WTC11 (cell line): ENCODE measurements at regions of chr10 and their contacts with region 1.

Region 1: DNA sequence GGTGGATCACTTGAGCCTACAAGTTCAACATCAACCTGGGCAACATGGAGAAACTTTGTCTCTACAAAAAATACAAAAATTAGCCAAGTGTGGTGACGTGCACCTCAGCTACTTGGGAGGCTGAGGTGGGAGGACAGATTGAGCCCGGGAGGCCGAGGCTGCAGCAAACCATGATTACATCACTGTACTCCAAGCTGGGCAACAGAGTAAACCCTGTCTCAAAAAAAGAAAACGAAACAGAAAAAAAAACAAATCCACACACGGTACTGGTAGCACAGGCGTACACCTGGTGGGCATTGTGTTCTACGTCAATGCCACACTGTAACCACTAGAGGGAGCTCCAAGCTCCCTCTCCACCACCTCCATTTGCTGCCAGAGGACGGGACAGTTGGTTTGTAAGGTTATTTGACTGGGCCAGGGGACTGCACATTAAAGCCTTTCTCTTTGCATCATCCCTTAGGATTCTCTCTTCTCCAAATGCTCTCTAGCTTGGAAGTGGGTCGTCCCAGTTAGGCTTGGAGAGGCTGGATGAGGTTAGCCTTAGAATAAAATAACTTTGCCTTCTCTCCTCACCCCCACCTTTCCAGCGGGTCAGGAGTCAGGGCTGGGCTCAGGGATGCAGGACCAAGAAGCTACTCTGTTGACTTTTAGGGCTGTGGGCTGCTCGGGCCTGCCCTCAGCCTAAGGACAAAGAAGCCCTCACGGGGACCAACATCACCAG is 130.8 kb downstream of the SORBS1 start:
- DNase-seq: peak; percentile 55
- ATAC-seq: peak; percentile 96
- H3K4me3 Mint-ChIP-seq: no peak overlapping the region
- H3K27ac Mint-ChIP-seq: no peak overlapping the region
- H3K4me1 Mint-ChIP-seq: peaks cover 2% of the 10 kb centered on the region; the same call in 1 of the 2 replicates
- H3K27me3 Mint-ChIP-seq: no peaks in the 10 kb centered on the region
- CTCF ChIP-seq: peak; percentile 96

Region 2: DNA sequence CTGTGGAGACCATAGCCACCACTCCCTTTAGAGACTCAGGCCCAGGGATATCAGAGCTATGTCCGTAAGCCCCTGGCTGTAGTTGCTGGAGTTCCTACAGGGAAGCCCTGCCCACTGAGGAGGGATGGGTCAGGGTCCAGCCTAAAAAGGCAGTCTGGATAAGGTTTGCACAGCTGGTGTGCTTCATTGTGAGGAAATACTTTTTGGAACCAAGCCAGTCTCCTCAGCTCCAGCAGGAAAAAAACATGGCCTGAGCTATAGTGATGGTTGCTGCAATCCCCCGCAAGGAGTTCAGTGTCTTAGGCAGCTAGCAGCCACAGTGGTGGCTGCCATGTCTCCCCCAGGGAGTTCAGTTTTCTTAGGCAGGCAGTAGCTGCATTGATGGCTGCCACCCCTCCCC is 308.5 kb before region 1 on chr10:
- CTCF ChIA-PET with region 1: no interaction called
- POLR2A ChIA-PET with region 1: no interaction called
- DNase-seq: no peak
- ATAC-seq: no peak
- H3K4me3 Mint-ChIP-seq: no peak overlapping the region
- H3K27ac Mint-ChIP-seq: no peak overlapping the region
- H3K4me1 Mint-ChIP-seq: no peaks in the 10 kb centered on the region
- H3K27me3 Mint-ChIP-seq: peaks cover 32% of the 10 kb centered on the region
- CTCF ChIP-seq: no peak

Region 3: DNA sequence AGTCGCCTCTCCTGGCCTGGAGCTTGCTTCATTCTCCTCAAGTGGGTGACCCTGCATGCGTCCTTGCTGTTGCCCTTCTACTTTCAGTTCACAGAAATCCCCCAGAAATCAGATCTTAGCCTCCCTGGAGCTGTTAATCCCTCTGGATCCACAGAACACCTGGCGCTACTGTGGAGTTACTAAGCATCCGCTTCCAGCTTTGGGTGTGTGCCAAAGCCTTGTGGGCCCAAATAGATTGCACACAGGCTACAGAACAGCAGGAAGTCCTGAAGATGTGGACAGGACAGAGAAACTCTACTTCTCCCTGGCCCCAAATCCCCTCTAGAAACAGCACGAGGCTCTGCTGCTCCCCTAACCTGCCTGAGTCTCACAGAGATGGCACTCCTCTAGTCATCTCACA is 103.0 kb before region 1 on chr10:
- CTCF ChIA-PET with region 1: no interaction called
- POLR2A ChIA-PET with region 1: no interaction called
- DNase-seq: no peak
- ATAC-seq: no peak
- H3K4me3 Mint-ChIP-seq: no peak overlapping the region
- H3K27ac Mint-ChIP-seq: no peak overlapping the region
- H3K4me1 Mint-ChIP-seq: peaks cover 9% of the 10 kb centered on the region
- H3K27me3 Mint-ChIP-seq: no peaks in the 10 kb centered on the region
- CTCF ChIP-seq: no peak

Region 4: DNA sequence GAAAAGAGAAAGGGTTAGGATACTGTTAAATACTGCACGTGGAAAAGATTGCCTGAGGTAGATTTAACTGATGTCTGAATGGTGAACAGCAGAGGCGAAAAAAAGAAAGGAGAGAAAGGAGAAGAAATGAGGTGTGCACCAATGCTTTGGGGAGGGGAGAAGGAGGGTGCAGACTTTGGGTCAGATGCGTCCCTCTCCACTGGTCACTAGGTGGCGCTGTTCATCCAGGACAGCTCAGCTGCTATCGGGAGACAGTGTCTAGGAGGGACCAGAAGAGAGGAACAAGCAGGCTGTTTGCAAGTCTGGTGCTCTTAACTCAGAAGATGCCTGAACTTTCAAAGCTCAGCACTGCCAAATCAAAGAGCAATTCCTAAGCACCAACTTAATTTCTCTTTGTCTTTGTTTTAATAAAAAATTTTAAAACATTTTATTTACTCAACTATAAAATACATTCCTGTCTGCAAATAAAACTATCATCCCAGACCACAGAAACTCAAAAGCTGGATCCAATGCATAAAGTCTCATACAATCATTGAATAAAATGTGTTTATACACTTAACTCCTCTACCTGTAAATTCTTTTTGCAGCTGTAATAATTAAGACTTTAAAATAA is 55.7 kb before region 1 on chr10:
- CTCF ChIA-PET with region 1: interaction called, 35 read pairs
- POLR2A ChIA-PET with region 1: no interaction called
- DNase-seq: peak; percentile 86
- ATAC-seq: peak; percentile 98
- H3K4me3 Mint-ChIP-seq: no peak overlapping the region
- H3K27ac Mint-ChIP-seq: no peak overlapping the region
- H3K4me1 Mint-ChIP-seq: peaks cover 28% of the 10 kb centered on the region
- H3K27me3 Mint-ChIP-seq: no peaks in the 10 kb centered on the region
- CTCF ChIP-seq: peak; percentile 99

Region 5: GRCh38 chr10:95403700-95404461 is 26.5 kb before region 1 on chr10:
- CTCF ChIA-PET with region 1: interaction called, 13 read pairs
- POLR2A ChIA-PET with region 1: no interaction called
- DNase-seq: no peak
- ATAC-seq: no peak
- H3K4me3 Mint-ChIP-seq: no peak overlapping the region
- H3K27ac Mint-ChIP-seq: peak overlapping the region; percentile 40; the same call in 1 of the 2 replicates
- H3K4me1 Mint-ChIP-seq: peaks cover 9% of the 10 kb centered on the region
- H3K27me3 Mint-ChIP-seq: no peaks in the 10 kb centered on the region
- CTCF ChIP-seq: no peak

Region 6: DNA sequence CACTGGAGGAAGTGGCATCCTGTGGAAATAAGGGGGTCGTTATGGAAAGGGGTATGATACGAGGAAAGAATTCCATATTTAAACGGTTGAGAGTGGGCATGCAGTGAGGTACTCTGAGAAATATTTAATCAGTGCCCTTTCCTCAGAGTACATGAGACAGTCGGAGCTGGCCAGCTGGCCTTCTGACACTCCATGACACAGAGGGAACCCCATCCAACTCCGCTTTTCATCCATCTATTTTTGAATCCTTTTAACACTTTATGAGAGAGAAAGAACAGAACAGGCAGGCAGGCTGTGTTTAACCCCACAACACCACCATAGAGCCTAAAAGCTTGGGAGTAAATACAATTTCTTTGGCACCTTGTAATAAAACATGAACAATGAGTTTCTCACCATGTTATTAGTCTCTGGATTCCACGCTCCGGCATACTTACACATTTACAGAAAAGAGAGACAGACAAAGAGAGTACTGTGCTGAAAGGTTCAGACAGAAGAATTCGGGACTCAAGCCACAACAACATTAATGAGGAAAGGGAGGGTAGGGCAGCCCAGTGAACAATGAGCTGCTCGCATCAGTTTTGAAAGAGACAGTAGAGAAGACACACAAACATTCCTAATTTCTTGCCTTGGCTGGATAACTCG is 15.4 kb before region 1 on chr10:
- CTCF ChIA-PET with region 1: interaction called, 21 read pairs
- POLR2A ChIA-PET with region 1: no interaction called
- DNase-seq: no peak
- ATAC-seq: no peak
- H3K4me3 Mint-ChIP-seq: no peak overlapping the region
- H3K27ac Mint-ChIP-seq: peak overlapping the region; percentile 85
- H3K4me1 Mint-ChIP-seq: peaks cover 43% of the 10 kb centered on the region
- H3K27me3 Mint-ChIP-seq: no peaks in the 10 kb centered on the region
- CTCF ChIP-seq: no peak

Region 7: GRCh38 chr10:95445837-95446486 is 15.6 kb after region 1 on chr10:
- CTCF ChIA-PET with region 1: interaction called, 28 read pairs
- POLR2A ChIA-PET with region 1: no interaction called
- DNase-seq: peak; percentile 67
- ATAC-seq: peak; percentile 92
- H3K4me3 Mint-ChIP-seq: no peak overlapping the region
- H3K27ac Mint-ChIP-seq: no peak overlapping the region
- H3K4me1 Mint-ChIP-seq: peaks cover 15% of the 10 kb centered on the region
- H3K27me3 Mint-ChIP-seq: no peaks in the 10 kb centered on the region
- CTCF ChIP-seq: peak; percentile 74

Region 8: GRCh38 chr10:95478935-95479334 is 48.5 kb after region 1 on chr10:
- CTCF ChIA-PET with region 1: interaction called, 21 read pairs
- POLR2A ChIA-PET with region 1: no interaction called
- DNase-seq: no peak
- ATAC-seq: no peak
- H3K4me3 Mint-ChIP-seq: no peak overlapping the region
- H3K27ac Mint-ChIP-seq: no peak overlapping the region
- H3K4me1 Mint-ChIP-seq: peaks cover 69% of the 10 kb centered on the region
- H3K27me3 Mint-ChIP-seq: no peaks in the 10 kb centered on the region
- CTCF ChIP-seq: no peak

Region 9: DNA sequence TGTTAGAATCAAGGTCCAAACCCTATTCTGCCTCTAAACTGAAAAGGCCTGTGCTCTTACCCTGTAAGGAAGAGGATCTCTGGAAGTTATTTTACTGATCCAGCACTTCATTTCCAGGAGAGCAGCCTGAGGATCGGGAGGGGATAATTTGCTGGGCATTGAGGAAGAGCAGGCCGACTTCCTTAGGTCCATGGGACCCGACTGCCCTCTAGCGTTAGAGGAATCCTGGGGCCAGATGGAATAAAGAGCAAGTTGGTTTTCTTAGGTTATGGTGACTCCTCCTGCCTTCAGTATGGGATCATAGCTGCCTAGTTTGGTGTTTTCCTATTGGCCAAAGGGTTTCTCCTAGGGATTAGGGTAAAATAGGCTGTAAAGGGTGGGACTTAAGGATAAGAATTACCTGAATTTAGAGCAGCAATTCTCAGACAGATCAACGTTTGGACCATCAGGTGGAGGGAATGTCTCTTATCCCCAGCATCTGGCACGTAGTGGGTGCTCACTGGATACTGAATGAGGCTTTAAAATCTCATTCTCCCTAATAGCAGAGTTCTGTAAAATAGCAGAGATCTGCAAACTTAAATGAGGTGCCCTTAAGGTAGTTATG is 170.8 kb after region 1 on chr10:
- CTCF ChIA-PET with region 1: interaction called, 166 read pairs
- POLR2A ChIA-PET with region 1: no interaction called
- DNase-seq: peak; percentile 86
- ATAC-seq: peak; percentile 95
- H3K4me3 Mint-ChIP-seq: no peak overlapping the region
- H3K27ac Mint-ChIP-seq: no peak overlapping the region
- H3K4me1 Mint-ChIP-seq: peaks cover 14% of the 10 kb centered on the region
- H3K27me3 Mint-ChIP-seq: no peaks in the 10 kb centered on the region
- CTCF ChIP-seq: peak; percentile 81